Heart left ventricle (tissue), 16 donors: ENCODE measurements at regions of chr18 and their contacts with region 1.

Region 1: DNA sequence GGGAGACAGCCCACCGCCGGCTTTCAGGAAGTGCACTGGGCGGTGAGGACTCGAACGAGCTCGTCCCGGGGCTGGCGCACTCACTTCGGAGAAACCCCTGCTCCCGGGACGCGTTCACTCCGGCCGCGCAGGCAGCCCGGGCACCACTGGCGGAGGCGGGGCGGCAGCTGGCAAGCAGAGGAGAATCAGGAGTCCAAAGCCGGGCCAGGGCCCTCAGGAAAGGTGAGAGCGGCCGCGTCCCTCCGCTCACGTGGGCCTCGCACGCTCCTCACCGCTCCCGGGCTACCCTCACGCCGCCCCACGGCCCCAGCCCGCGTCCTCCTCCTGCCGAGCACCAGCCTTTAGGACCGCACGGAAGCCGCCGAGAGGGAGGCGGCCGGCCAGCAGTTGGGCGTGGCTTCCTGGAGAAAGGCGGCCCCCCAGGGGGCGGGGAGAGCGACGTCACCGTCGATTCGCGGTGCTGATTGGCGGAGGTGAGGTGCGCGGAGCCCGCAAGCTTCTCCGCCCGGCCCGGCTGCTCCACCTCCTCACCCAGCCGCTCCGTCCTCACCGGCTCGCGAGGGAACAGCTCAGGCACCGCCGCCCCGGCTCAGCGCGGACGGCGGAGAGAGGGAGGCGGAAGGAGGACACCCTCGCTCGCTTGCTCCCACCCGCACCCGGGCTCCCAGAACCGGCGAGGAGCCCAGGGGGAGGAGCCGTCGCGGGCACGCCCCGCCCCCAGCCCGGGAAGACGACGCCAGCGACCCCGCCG is at the start of gene ZCCHC2:
- DNase-seq: peak; percentile 98 to 99 (median 99)
- ATAC-seq: peak; percentile 82 to 92 (median 90)
- H3K4me3 ChIP-seq: peak within 1 kb of the TSS; percentile 66 to 98 (median 94)
- H3K27ac ChIP-seq: peak within 1 kb of the TSS; percentile 90 to 100 (median 98)
- H3K4me1 ChIP-seq: peaks cover 3 to 36% (median 24%) of the 10 kb centered on the region in 12 donors
- H3K27me3 ChIP-seq: no peaks in the 10 kb centered on the region
- CTCF ChIP-seq: no peak
- POLR2A ChIP-seq: peak; percentile 78 to 89
- total RNA-seq, gene ZCCHC2: 11.2 to 27.5 (median 18.9) TPM

Region 2: DNA sequence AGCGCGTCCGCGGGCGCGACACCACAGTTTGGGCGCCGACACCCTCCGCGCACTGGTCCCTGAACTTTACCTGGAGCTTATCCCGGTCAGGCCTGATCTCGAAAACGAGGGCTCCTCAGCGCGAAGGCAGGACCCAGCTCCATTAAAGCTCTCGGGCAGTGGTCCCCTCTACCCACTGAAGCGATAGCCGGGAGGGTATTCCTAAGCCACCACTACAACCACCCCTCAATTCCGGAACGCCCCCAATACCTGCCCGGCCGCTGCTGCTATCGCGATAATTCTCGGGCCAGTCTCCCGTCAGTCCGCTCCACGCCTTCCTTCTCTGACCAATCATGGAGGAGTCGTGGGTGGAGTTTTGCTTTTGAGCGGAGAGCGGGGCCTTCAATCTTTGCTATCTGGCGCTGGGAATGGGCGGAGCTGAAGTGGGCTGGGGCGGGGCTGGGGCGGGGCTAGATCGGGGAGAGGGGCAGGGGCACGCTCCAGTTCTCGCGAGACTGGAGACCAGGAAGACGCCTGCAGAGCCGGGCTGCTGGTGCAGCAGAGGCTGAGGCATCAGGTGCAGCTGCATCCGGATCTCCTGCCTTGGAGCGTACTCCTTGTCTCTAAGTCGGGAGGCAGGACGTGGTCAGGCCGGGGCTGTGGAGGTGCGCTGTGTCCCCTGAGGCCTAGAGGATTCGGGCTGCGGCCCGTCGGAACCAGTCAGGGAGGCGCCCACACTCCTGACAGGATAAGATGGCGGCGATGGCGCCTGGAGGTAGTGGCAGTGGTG is 335.7 kb before region 1 on chr18 and contains the starts of genes PIGN and RELCH:
- intact Hi-C with region 1: loop called in 1 of 10 experiments (anchors 5 kb)
- DNase-seq: peak; percentile 93 to 97 (median 96)
- ATAC-seq: peak; percentile 99 to 100 (median 99)
- H3K4me3 ChIP-seq: peak within 1 kb of the TSS; percentile 66 to 100 (median 90)
- H3K27ac ChIP-seq: peak within 1 kb of the TSS; percentile 37 to 87 (median 81)
- H3K4me1 ChIP-seq: peaks cover 0 to 51% (median 35%) of the 10 kb centered on the region in 12 donors
- H3K27me3 ChIP-seq: no peaks in the 10 kb centered on the region
- CTCF ChIP-seq: no peak
- POLR2A ChIP-seq: peak in 1 of 2 donors; percentile 74
- total RNA-seq, gene PIGN: 16.6 to 29.6 (median 23.3) TPM
- total RNA-seq, gene RELCH: 11.6 to 24.8 (median 15.2) TPM

Region 3: GRCh38 chr18:62425465-62426195 is 97.0 kb before region 1 on chr18:
- intact Hi-C with region 1: loop called in 9 of 10 experiments (anchors 1 to 5 kb)
- DNase-seq: peak in 4 of 5 donors; percentile 77 to 89 (median 86)
- ATAC-seq: peak; percentile 91 to 95 (median 92)
- H3K4me3 ChIP-seq: peak overlapping the region in 10 of 12 donors; percentile 20 to 54 (median 41)
- H3K27ac ChIP-seq: peak overlapping the region; percentile 25 to 93 (median 85)
- H3K4me1 ChIP-seq: peaks cover 0 to 32% (median 10%) of the 10 kb centered on the region in 12 donors
- H3K27me3 ChIP-seq: no peaks in the 10 kb centered on the region
- CTCF ChIP-seq: peak; percentile 72 to 92 (median 84)
- POLR2A ChIP-seq: no peak

Region 4: GRCh38 chr18:62434798-62435197 is 87.9 kb before region 1 on chr18:
- intact Hi-C with region 1: loop called in 3 of 10 experiments (anchors 5 kb)
- DNase-seq: no peak
- ATAC-seq: no peak
- H3K4me3 ChIP-seq: no peak overlapping the region
- H3K27ac ChIP-seq: no peak overlapping the region
- H3K4me1 ChIP-seq: peaks cover 0 to 40% (median 20%) of the 10 kb centered on the region in 12 donors
- H3K27me3 ChIP-seq: no peaks in the 10 kb centered on the region
- CTCF ChIP-seq: no peak
- POLR2A ChIP-seq: no peak

Region 5: GRCh38 chr18:62450546-62451406 is 71.9 kb before region 1 on chr18:
- intact Hi-C with region 1: loop called in 1 of 10 experiments (anchors 10 kb)
- DNase-seq: peak; percentile 58 to 87 (median 74)
- ATAC-seq: peak; percentile 88 to 97 (median 94)
- H3K4me3 ChIP-seq: no peak overlapping the region
- H3K27ac ChIP-seq: peak overlapping the region in 11 of 12 donors; percentile 53 to 78 (median 73)
- H3K4me1 ChIP-seq: peaks cover 0 to 33% (median 11%) of the 10 kb centered on the region in 12 donors
- H3K27me3 ChIP-seq: no peaks in the 10 kb centered on the region
- CTCF ChIP-seq: no peak
- POLR2A ChIP-seq: no peak

Region 6: GRCh38 chr18:62479574-62479973 is 43.1 kb before region 1 on chr18:
- intact Hi-C with region 1: no loop called
- DNase-seq: no peak
- ATAC-seq: no peak
- H3K4me3 ChIP-seq: no peak overlapping the region
- H3K27ac ChIP-seq: no peak overlapping the region
- H3K4me1 ChIP-seq: peaks cover 0 to 7% (median 0%) of the 10 kb centered on the region in 12 donors
- H3K27me3 ChIP-seq: no peaks in the 10 kb centered on the region
- CTCF ChIP-seq: no peak
- POLR2A ChIP-seq: no peak

Region 7: DNA sequence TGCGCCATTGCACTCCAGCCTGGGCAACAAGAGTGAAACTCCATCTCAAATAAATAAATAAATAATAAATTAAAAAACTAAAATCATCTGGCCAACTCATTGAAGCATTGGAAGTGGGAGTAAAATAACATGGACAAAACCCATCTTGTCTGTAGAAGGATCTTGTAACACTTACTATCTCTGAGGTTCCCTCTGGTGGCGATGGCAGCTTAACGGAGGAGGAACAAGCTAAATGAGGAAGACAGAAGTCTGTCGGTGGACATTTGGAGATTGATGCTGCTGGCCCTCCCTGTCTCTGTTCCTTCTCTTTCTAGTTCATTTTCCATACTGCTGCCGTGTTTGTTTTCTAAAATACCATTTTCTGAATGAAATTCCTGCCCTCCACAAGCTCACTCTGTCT is 43.5 kb after region 1 on chr18:
- intact Hi-C with region 1: loop called in 1 of 10 experiments (anchors 5 kb)
- DNase-seq: peak in 3 of 5 donors; percentile 40 to 66 (median 42)
- ATAC-seq: peak in 2 of 4 donors; percentile 53 to 68
- H3K4me3 ChIP-seq: no peak overlapping the region
- H3K27ac ChIP-seq: no peak overlapping the region
- H3K4me1 ChIP-seq: no peaks in the 10 kb centered on the region
- H3K27me3 ChIP-seq: no peaks in the 10 kb centered on the region
- CTCF ChIP-seq: peak in 11 of 12 donors; percentile 12 to 48 (median 40)
- POLR2A ChIP-seq: no peak

Region 8: DNA sequence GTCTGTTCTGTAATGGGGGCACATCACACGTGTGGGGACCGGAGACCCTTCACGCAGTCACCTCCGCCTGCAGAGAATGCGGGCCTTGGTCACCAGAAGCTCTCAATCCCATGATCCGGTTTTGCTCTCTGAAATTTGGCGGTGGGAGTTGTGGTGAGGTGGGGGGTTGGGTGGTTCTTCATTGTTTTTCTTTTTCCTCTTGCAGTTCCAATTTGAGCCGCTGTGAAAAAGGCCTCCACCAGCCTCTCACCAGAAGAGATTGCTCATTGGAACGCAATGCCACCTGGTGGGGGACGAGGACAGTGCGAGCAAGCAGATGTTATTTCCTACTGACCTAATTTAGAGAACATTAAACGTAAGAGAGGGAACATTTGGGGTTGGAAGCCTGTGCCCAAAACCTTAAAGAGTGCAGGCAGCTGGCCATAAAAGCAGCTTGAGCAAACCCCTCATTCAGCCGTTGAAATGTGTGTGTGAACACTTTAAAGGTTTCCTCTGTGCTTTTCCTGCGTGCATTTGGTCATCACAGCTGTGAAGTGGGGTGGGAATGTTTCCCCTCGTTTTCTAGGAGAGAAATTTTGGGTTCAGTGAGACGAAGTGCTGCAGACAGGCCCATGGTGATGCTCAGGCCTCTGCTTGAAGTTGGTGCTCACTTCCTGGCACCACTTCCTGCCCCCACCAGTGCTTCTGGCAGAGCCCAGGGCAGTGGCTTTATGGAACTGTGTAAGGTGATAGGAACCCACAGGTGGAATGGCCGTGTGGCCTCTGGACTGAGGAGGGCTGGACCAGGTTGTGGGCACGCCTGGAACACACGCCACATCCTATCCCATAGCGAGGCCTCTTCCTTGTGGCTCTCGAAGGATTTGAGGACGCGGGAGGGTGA is 61.8 kb after region 1 on chr18:
- intact Hi-C with region 1: loop called in 3 of 10 experiments (anchors 5 to 10 kb)
- DNase-seq: peak; percentile 82 to 87 (median 85)
- ATAC-seq: peak; percentile 79 to 88 (median 85)
- H3K4me3 ChIP-seq: peak overlapping the region in 5 of 12 donors; percentile 10 to 37 (median 19)
- H3K27ac ChIP-seq: peak overlapping the region in 6 of 12 donors; percentile 27 to 69 (median 41)
- H3K4me1 ChIP-seq: peaks cover 0 to 25% (median 12%) of the 10 kb centered on the region in 12 donors
- H3K27me3 ChIP-seq: no peaks in the 10 kb centered on the region
- CTCF ChIP-seq: peak; percentile 79 to 98 (median 93)
- POLR2A ChIP-seq: no peak